ENCODE measurements at regions of chr1 and their contacts with region 1.

Region 1: GRCh38 chr1:226062558-226063223 is at the start of gene H3-3A:
- DNase-seq: peak; percentile 98
- H3K4me3 ChIP-seq: peak within 1 kb of the TSS; percentile 77 to 84
- H3K4me3 Mint-ChIP-seq: peak within 1 kb of the TSS; percentile 99 to 100 (median 100)
- H3K27ac ChIP-seq: peak within 1 kb of the TSS; percentile 89
- H3K27ac Mint-ChIP-seq: peak within 1 kb of the TSS; percentile 96 to 100 (median 99)
- H3K4me1 ChIP-seq: peaks cover 47% of the 10 kb centered on the region
- H3K4me1 Mint-ChIP-seq: peaks cover 31 to 63% (median 43%) of the 10 kb centered on the region in 4 donors
- H3K27me3 ChIP-seq: no peaks in the 10 kb centered on the region
- H3K27me3 Mint-ChIP-seq: peaks cover 0 to 2% of the 10 kb centered on the region in 2 donors
- total RNA-seq, gene H3-3A: 391 to 397 TPM

Region 2: GRCh38 chr1:225447650-225448089 is 615.0 kb before region 1 on chr1:
- CTCF ChIA-PET with region 1: no interaction called
- POLR2A ChIA-PET with region 1: interaction called, 25 read pairs
- intact Hi-C with region 1: no loop called
- DNase-seq: no peak
- H3K4me3 ChIP-seq: no peak overlapping the region
- H3K4me3 Mint-ChIP-seq: no peak overlapping the region
- H3K27ac ChIP-seq: no peak overlapping the region
- H3K27ac Mint-ChIP-seq: peak overlapping the region in 1 of 7 donors; percentile 17
- H3K4me1 ChIP-seq: peaks cover 47% of the 10 kb centered on the region
- H3K4me1 Mint-ChIP-seq: peaks cover 29 to 55% (median 43%) of the 10 kb centered on the region in 4 donors
- H3K27me3 ChIP-seq: no peaks in the 10 kb centered on the region
- H3K27me3 Mint-ChIP-seq: no peaks in the 10 kb centered on the region

Region 3: GRCh38 chr1:225896937-225897549 is 165.6 kb before region 1 on chr1:
- CTCF ChIA-PET with region 1: no interaction called
- POLR2A ChIA-PET with region 1: interaction called, 18 read pairs
- intact Hi-C with region 1: no loop called
- DNase-seq: peak; percentile 87 to 92 (median 88)
- H3K4me3 ChIP-seq: peak overlapping the region in 1 of 2 donors; percentile 13
- H3K4me3 Mint-ChIP-seq: peak overlapping the region; percentile 72 to 92 (median 82)
- H3K27ac ChIP-seq: peak overlapping the region; percentile 72
- H3K27ac Mint-ChIP-seq: peak overlapping the region; percentile 94 to 99 (median 98)
- H3K4me1 ChIP-seq: peaks cover 45% of the 10 kb centered on the region
- H3K4me1 Mint-ChIP-seq: peaks cover 34 to 65% (median 46%) of the 10 kb centered on the region in 4 donors
- H3K27me3 ChIP-seq: no peaks in the 10 kb centered on the region
- H3K27me3 Mint-ChIP-seq: no peaks in the 10 kb centered on the region

Region 4: GRCh38 chr1:225999227-225999911 is 63.3 kb before region 1 on chr1 and contains the start of gene SDE2:
- CTCF ChIA-PET with region 1: interaction called, 28 read pairs
- POLR2A ChIA-PET with region 1: interaction called, 614 read pairs
- intact Hi-C with region 1: loop called (anchors 1 kb)
- DNase-seq: peak; percentile 99 to 100 (median 100)
- H3K4me3 ChIP-seq: peak within 1 kb of the TSS; percentile 78 to 99
- H3K4me3 Mint-ChIP-seq: peak within 1 kb of the TSS; percentile 99 to 100 (median 100)
- H3K27ac ChIP-seq: peak within 1 kb of the TSS; percentile 98
- H3K27ac Mint-ChIP-seq: peak within 1 kb of the TSS; percentile 100
- H3K4me1 ChIP-seq: peaks cover 81% of the 10 kb centered on the region
- H3K4me1 Mint-ChIP-seq: peaks cover 44 to 78% (median 61%) of the 10 kb centered on the region in 4 donors
- H3K27me3 ChIP-seq: no peaks in the 10 kb centered on the region
- H3K27me3 Mint-ChIP-seq: no peaks in the 10 kb centered on the region
- total RNA-seq, gene SDE2: 21.1 to 21.2 TPM

Region 5: DNA sequence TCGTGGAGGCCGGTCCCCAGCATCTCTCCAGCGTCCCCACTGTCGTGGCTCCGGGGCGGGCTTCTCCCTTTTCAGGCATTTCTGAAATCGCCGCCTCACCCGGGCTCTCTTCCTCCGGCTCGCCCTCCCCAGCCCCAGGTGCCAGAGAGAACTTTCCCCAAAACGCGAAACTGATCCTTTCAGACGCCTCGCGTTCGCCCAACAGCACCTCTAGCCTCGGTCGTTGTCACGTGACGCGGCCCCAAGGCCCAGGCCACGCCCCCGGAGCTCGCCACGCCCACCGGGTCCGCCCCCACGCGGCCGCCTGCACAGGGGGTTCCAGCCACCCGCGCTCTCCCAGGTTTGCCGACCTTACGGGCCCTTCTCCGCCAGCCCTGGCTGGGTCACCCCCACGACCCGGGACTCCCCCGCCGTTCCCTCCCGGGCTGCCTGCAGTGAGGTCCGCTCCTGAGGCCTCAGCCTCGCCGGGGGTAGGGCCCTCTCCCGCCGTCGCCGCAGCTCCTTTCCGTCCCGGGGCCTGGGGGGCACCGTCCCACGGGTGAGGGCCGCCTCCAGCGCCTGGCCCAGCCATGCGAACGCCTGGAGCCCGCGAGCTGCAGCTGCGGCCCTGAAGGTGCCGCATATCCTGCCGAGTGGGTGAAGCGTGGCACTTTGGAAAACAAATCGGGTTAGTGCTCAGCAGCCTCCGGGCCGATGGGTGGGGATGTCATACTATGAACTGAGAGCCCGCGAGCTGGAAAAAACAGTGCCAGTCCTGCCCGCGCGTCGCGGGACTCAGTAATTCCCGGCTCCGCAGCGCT is 20.8 kb after region 1 on chr1:
- CTCF ChIA-PET with region 1: interaction called, 53 read pairs
- POLR2A ChIA-PET with region 1: interaction called, 47 read pairs
- intact Hi-C with region 1: loop called (anchors 1 kb)
- DNase-seq: peak; percentile 84 to 92 (median 89)
- H3K4me3 ChIP-seq: peak overlapping the region; percentile 36 to 69
- H3K4me3 Mint-ChIP-seq: peak overlapping the region; percentile 85 to 98 (median 90)
- H3K27ac ChIP-seq: peak overlapping the region; percentile 48
- H3K27ac Mint-ChIP-seq: peak overlapping the region in 6 of 7 donors; percentile 28 to 87 (median 78)
- H3K4me1 ChIP-seq: peaks cover 14% of the 10 kb centered on the region
- H3K4me1 Mint-ChIP-seq: peaks cover 4 to 11% (median 7%) of the 10 kb centered on the region in 4 donors
- H3K27me3 ChIP-seq: no peaks in the 10 kb centered on the region
- H3K27me3 Mint-ChIP-seq: no peaks in the 10 kb centered on the region

Region 6: DNA sequence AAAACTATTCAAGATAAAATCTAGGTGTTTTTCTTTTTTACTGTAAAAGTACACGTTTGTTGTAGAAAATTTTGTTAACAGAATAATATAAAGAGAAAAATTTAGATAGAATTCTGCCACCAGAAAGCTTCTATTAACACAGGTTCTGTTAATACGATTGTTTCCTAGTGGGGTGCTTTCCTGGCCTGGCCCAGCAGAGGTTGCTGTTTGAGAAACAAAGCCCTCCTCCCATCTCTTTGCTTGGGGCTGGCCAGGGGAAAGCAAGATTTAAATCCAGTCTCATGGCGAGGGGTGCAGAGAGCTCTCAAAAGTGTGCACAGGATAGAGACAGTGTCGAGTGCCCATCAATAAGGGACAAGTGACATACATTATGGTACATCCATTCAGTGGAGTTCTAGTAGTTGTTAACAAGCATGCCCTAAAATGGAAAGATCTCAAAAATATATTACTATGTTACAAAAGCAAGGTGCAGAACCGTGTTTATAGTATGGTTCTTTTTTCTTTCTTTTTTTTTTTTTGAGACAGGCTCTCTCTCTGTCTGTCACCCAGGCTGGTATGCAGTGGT is 138.4 kb after region 1 on chr1:
- CTCF ChIA-PET with region 1: interaction called, 9 read pairs
- POLR2A ChIA-PET with region 1: interaction called, 4 read pairs
- intact Hi-C with region 1: loop called (anchors 2 kb)
- DNase-seq: no peak
- H3K4me3 ChIP-seq: no peak overlapping the region
- H3K4me3 Mint-ChIP-seq: no peak overlapping the region
- H3K27ac ChIP-seq: no peak overlapping the region
- H3K27ac Mint-ChIP-seq: no peak overlapping the region
- H3K4me1 ChIP-seq: no peaks in the 10 kb centered on the region
- H3K4me1 Mint-ChIP-seq: peaks cover 0 to 2% (median 0%) of the 10 kb centered on the region in 4 donors
- H3K27me3 ChIP-seq: no peaks in the 10 kb centered on the region
- H3K27me3 Mint-ChIP-seq: peaks cover 3 to 12% of the 10 kb centered on the region in 2 donors

Measured in CD4-positive, alpha-beta memory T cell (primary cell).